ENCODE measurements at regions of chr10 and their contacts with region 1.

Region 1: DNA sequence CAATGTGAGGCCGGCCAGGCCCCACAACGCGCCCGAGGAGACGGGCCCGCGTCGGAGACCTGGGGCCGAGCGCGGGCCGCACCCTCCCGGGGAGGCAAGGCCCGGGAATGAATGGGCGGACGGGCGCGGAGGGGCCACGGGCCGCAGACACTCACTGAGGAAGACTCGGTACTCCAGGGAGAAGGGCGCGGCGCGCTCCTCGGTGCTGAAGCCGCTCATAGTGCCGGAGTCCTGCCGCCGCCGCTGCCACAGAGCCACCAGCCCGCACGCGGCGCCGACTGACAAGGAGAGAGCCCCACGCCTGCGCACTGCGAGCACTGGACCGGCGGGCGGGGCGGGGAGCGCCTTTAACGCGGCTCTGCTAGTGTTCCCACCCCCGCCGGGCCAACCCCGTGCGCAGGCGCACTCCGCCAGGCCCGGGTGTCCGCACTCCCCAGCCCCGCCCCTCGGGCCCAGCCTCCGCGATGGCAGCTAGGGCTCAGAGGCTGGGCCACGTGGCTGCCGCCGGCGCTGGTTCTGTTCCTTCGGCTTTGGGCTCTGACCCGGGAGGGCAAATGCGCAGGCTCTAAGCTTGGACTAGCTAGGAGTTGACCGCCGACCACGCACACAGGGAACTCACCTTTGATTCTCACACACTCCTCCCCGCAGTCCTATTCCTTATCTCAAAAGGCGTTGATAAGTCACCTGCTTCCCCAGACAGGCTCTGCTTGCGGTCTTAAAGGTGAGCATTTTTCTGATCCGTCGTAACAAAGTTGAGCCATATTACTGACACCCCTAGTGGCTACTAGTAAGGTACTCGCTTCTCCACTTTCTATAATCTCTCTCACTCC is at the start of gene PPA1:
- DNase-seq: peak; percentile 100
- H3K4me3 Mint-ChIP-seq: peak within 1 kb of the TSS; percentile 86
- H3K27ac Mint-ChIP-seq: peak within 1 kb of the TSS; percentile 84
- H3K4me1 Mint-ChIP-seq: peaks cover 44% of the 10 kb centered on the region
- H3K27me3 Mint-ChIP-seq: no peaks in the 10 kb centered on the region
- total RNA-seq, gene PPA1: 374 and 393 TPM in 2 replicates

Region 2: GRCh38 chr10:70034232-70034631 is 199.1 kb before region 1 on chr10:
- intact Hi-C with region 1: no loop called
- DNase-seq: no peak
- H3K4me3 Mint-ChIP-seq: no peak overlapping the region
- H3K27ac Mint-ChIP-seq: no peak overlapping the region
- H3K4me1 Mint-ChIP-seq: no peaks in the 10 kb centered on the region
- H3K27me3 Mint-ChIP-seq: peaks cover 13% of the 10 kb centered on the region

Region 3: DNA sequence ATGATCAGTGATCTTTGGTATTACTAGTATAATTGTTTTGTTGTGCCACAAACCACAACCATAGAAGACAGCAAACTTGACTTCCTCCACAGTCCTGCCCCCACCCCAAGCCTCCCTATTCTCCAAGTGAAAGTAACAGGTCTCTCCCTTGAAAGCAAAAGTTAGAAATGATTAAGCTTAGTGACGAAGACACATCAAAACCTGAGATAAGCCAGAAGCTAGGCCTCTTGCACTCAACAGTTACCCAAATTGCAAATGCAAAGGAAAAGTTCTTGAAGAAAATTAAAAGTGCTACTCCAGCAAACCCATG is 70.5 kb before region 1 on chr10:
- intact Hi-C with region 1: loop called (anchors 2 kb)
- DNase-seq: peak; percentile 58
- H3K4me3 Mint-ChIP-seq: peak overlapping the region; percentile 32
- H3K27ac Mint-ChIP-seq: peak overlapping the region; percentile 82
- H3K4me1 Mint-ChIP-seq: peaks cover 68% of the 10 kb centered on the region
- H3K27me3 Mint-ChIP-seq: no peaks in the 10 kb centered on the region

Region 4: GRCh38 chr10:70221030-70221429 is 12.3 kb before region 1 on chr10:
- intact Hi-C with region 1: loop called (anchors 1 kb)
- DNase-seq: no peak
- H3K4me3 Mint-ChIP-seq: peak overlapping the region; percentile 28
- H3K27ac Mint-ChIP-seq: no peak overlapping the region
- H3K4me1 Mint-ChIP-seq: peaks cover 27% of the 10 kb centered on the region
- H3K27me3 Mint-ChIP-seq: no peaks in the 10 kb centered on the region

Region 5: GRCh38 chr10:70355051-70356021 is 122.0 kb after region 1 on chr10:
- intact Hi-C with region 1: loop called (anchors 1 kb)
- DNase-seq: peak; percentile 38
- H3K4me3 Mint-ChIP-seq: peak overlapping the region; percentile 74
- H3K27ac Mint-ChIP-seq: peak overlapping the region; percentile 76
- H3K4me1 Mint-ChIP-seq: peaks cover 62% of the 10 kb centered on the region
- H3K27me3 Mint-ChIP-seq: peaks cover 3% of the 10 kb centered on the region

Region 6: GRCh38 chr10:70381471-70382421 is 148.4 kb after region 1 on chr10:
- intact Hi-C with region 1: loop called (anchors 1 kb)
- DNase-seq: peak; percentile 31
- H3K4me3 Mint-ChIP-seq: peak overlapping the region; percentile 86
- H3K27ac Mint-ChIP-seq: no peak overlapping the region
- H3K4me1 Mint-ChIP-seq: peaks cover 14% of the 10 kb centered on the region
- H3K27me3 Mint-ChIP-seq: peaks cover 14% of the 10 kb centered on the region

Region 7: GRCh38 chr10:70478191-70479164 is 245.2 kb after region 1 on chr10 and contains the start of gene PALD1:
- intact Hi-C with region 1: loop called (anchors 1 kb)
- DNase-seq: no peak
- H3K4me3 Mint-ChIP-seq: peak within 1 kb of the TSS; percentile 78
- H3K27ac Mint-ChIP-seq: peak within 1 kb of the TSS; percentile 85
- H3K4me1 Mint-ChIP-seq: peaks cover 49% of the 10 kb centered on the region
- H3K27me3 Mint-ChIP-seq: peaks cover 59% of the 10 kb centered on the region
- total RNA-seq, gene PALD1: 0.83 and 0.88 TPM in 2 replicates

Measured in activated T-helper 1 cell treated with anti-CD3 and anti-CD28 coated beads, Interleukin-12 subunit alpha, Interleukin-12 subunit beta, Interleukin-2, Interleukin-4 antibody, amounts not matched to agents 30 ng/mL and 10 ng/mL and 1 ng/mL, durations not matched to agents 14 hours and 24 hours and 36 hours (primary cell).